HepG2 (cell line): ENCODE measurements at regions of chr6 and their contacts with region 1.

Region 1: DNA sequence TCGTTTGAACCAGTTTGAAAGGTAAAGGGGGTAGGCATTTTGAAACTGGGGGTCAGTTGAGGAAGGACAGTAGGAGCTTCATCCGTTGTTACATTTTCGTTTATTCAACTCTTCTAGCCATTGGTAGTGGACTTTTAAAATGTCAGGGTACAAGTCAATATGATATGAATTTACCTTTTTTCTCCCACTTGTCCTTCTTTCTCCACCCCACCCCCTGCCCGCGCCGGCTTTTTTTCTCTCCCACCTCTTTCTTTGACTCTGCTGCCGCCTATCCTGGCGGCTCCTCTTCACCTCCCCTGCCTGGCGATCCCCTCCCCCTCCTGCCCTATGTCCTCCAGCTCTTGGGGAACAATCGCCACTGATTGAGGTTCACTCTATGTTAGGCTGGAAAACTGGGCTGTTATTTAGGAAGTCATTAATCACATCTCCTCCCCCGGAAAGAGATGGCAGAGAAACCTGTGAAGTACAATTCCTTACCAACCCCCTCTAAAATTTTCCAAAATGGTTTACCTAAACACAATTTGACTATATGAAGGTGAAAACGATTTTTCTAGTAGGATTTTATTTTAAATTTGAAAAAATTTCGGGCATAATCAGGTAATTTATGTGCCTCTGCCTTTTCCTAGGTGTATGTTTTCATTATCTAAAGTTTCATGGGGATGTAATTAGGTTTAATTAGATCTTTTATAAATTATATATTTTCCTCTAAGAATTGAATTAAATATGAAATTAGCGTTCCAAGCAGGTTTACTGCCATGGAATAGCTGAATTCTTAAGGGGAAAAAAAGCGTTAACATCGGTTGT is 778 bp upstream of the LIN28B start:
- DNase-seq: peak; percentile 78
- ATAC-seq: peak; percentile 70
- H3K4me3 ChIP-seq: peak overlapping the region; percentile 70 to 89 (median 72)
- H3K27ac ChIP-seq: peak overlapping the region; percentile 90
- H3K4me1 ChIP-seq: peaks cover 29% of the 10 kb centered on the region
- H3K27me3 ChIP-seq: no peaks in the 10 kb centered on the region; a peak in 2 of 5 replicates
- CTCF ChIP-seq: peak; percentile 51
- EP300 ChIP-seq: peak in 1 of 2 experiments; percentile 51; a peak in 1 of 4 replicates
- POLR2A ChIP-seq: peak in 1 of 2 experiments; percentile 29; a peak in 1 of 4 replicates
- RAD21 ChIP-seq: no peak

Region 2: DNA sequence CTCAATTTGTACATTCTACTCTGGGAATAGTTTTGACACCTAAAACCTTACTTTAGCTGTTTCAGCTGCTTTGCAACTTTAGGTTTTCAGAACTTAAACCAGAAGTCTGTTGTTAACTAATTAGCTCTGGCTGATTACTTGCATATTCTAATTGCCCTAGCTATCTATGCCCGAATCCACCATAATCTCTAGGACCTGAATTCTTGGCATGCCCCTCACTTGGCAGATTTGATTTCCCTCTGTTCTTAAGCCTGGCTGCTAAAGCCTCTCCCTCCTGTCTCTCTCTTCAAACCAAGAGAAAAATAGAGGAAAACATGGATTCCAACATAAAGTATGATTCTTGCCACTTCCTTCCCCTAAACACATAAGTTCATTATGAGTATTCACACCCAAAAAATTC is 34.2 kb before region 1 on chr6:
- CTCF ChIA-PET with region 1: no interaction called
- POLR2A ChIA-PET with region 1: no interaction called
- in situ Hi-C with region 1: no loop called
- intact Hi-C with region 1: no loop called
- DNase-seq: no peak
- ATAC-seq: no peak
- H3K4me3 ChIP-seq: no peak overlapping the region
- H3K27ac ChIP-seq: no peak overlapping the region
- H3K4me1 ChIP-seq: no peaks in the 10 kb centered on the region
- H3K27me3 ChIP-seq: no peaks in the 10 kb centered on the region; a peak in 1 of 5 replicates
- CTCF ChIP-seq: no peak
- EP300 ChIP-seq: no peak
- POLR2A ChIP-seq: no peak
- RAD21 ChIP-seq: no peak

Region 3: DNA sequence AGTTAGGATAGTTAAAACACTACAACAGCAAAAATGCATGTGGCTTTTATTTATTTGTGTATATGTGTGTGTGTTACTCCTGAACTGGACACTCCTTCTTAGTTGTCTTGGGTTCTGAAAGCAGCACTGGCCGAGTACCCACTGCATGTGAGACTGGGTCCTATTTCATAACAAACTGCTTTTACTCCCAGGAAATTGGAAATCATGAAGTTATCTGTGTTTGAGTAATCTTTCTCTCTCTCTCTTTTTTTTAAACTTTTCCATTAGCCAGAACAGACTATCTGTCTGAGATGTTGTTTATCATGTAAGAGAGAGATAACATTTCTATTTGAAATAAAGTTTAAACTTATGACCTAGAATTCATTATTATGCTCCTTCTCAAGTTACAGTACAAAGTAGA is 111.2 kb after region 1 on chr6:
- CTCF ChIA-PET with region 1: no interaction called
- POLR2A ChIA-PET with region 1: interaction called, 6 read pairs
- in situ Hi-C with region 1: no loop called
- intact Hi-C with region 1: loop called (anchors 2 kb)
- DNase-seq: peak; percentile 36
- ATAC-seq: peak; percentile 55
- H3K4me3 ChIP-seq: no peak overlapping the region; a peak in 1 of 6 replicates
- H3K27ac ChIP-seq: peak overlapping the region; percentile 61
- H3K4me1 ChIP-seq: peaks cover 65% of the 10 kb centered on the region
- H3K27me3 ChIP-seq: no peaks in the 10 kb centered on the region
- CTCF ChIP-seq: no peak
- EP300 ChIP-seq: no peak
- POLR2A ChIP-seq: no peak
- RAD21 ChIP-seq: no peak